GM13976 (cell line): ENCODE measurements at regions of chr3 and their contacts with region 1.

Region 1: DNA sequence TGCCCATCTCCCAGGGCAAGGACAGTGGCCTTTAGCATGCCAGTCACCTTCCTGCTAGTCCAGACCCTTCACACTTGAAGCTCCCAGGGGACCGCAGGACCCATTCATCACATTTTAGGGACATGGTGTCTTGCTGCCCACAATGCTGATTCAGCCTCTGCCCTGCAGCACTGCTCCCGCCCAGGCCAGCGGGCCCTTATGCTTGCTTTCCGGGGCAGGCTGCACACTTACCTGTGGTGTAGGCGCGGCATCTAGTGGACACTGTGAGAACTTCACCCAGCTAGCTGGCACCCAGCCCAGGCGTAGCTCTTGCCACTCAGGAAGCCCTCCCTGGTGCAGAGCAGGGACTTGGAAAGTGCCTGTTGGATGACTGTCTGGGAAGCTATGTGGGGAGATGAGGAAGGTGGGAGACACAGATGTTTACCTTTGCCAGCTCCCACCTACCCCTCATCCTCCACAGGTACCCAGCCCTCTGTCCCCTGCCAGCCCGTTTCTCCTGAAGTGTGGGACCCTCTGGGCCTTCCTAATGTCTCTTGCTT is 26.2 kb upstream of the NR2C2 start:
- DNase-seq: peak; percentile 88
- CTCF ChIP-seq: peak; percentile 90

Region 2: DNA sequence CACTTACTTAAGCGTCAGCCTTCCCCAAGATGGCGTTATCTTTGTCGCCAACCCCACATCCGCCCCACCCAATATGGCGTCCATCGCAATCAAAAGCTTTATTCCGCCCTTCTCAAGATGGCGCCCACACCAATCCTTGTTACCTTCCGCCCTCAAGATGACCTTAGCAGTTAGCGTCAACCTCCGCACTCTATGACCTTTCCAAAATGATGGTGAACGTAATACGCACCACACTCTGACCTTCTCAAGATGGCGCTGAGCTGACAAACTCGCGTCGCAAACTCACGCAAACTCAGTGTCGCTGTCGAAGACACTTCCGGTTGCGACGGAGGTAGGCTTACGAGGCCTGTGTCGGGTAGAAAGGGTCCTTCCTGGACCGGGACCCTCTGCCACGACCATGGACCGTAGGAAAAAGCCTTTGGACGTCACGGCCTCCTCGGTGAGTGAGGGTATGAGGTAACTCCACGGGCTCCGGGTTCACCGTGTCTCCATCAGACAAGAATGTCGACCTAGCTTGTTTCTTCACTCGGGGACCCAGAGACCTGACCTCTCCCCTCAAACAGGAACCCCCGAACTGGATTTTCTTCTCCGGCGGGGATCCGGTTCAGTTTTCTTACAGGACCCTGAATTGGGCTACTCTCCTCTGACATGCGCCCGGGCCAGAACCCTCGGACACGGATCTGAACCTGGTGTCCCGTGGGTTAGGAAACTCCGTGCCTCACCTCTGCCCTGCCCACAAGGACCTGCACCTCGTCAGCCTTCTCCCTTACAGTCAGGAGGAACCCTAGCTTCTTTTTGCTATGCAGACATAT is 269.5 kb before region 1 on chr3 and contains the start of gene CCDC174:
- in situ Hi-C with region 1: loop called (anchors 25 kb)
- DNase-seq: peak; percentile 93
- CTCF ChIP-seq: no peak

Region 3: GRCh38 chr3:14791343-14791945 is 129.7 kb before region 1 on chr3:
- in situ Hi-C with region 1: loop called (anchors 10 kb)
- DNase-seq: peak; percentile 82
- CTCF ChIP-seq: peak; percentile 69

Region 4: GRCh38 chr3:15074493-15074892 is 153.3 kb after region 1 on chr3:
- in situ Hi-C with region 1: no loop called
- DNase-seq: no peak
- CTCF ChIP-seq: no peak